B cell (primary cell): ENCODE measurements at regions of chr1 and their contacts with region 1.

Region 1: DNA sequence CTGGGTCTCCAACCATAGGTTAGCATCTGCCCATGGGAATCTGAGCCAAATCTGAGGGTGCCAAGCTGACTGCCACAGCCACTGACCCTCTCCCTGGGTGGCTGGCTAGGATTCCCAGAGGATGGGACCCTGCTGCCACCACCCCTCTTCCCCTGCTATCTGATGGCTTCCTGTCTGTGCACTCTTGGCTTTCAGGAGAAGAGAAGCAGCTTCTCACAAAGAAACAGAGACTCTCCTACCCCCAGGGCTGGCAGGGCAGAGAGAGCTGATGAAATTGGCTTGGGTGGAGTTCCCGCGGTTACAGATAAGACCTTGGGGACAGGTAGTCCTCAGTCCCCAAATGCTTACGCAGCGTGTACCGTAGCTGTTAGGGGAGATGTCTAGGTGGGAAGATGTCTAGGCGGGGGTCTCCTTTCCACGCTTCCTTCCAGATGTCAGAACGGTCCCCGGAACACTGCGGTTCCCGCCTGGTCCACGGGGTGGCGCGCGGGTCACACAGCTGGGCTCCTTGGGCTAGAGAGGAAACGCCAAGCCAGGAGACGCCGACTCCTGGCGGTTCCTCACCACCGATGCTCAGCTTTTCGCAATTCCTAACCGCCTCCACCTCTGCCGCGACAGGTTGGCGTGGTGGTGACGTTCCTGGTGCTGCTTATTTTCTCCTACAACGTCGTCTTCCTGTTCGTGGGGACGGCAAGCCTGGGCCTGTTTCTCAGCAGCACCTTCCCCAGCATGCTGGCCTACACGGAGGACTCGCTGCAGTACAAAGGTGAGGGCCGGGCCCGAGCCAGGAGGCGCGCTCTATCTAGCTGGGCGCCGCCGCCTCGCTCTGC is 40.1 kb downstream of the ELK4 start:
- DNase-seq: peak; percentile 90
- ATAC-seq: peak; percentile 89
- H3K4me3 ChIP-seq: peak overlapping the region in 4 of 5 experiments; percentile 51 to 69 (median 60)
- H3K4me3 Mint-ChIP-seq: peak overlapping the region; percentile 87
- H3K27ac ChIP-seq: peak overlapping the region; percentile 59 to 72
- H3K27ac Mint-ChIP-seq: peak overlapping the region; percentile 85
- H3K4me1 ChIP-seq: peaks cover 46 to 54% of the 10 kb centered on the region in 2 donors
- H3K4me1 Mint-ChIP-seq: peaks cover 48% of the 10 kb centered on the region
- H3K27me3 ChIP-seq: no peaks in the 10 kb centered on the region
- H3K27me3 Mint-ChIP-seq: no peaks in the 10 kb centered on the region
- CTCF ChIP-seq: peak; percentile 98

Region 2: GRCh38 chr1:205528887-205529825 is 62.6 kb before region 1 on chr1:
- CTCF ChIA-PET with region 1: interaction called, 49 read pairs
- POLR2A ChIA-PET with region 1: no interaction called
- intact Hi-C with region 1: loop called (anchors 2 kb)
- DNase-seq: peak; percentile 86
- ATAC-seq: peak; percentile 85
- H3K4me3 ChIP-seq: peak overlapping the region in 4 of 5 experiments; percentile 25 to 60 (median 38)
- H3K4me3 Mint-ChIP-seq: peak overlapping the region; percentile 79
- H3K27ac ChIP-seq: no peak overlapping the region
- H3K27ac Mint-ChIP-seq: peak overlapping the region; percentile 26
- H3K4me1 ChIP-seq: peaks cover 4 to 10% of the 10 kb centered on the region in 2 donors
- H3K4me1 Mint-ChIP-seq: peaks cover 7% of the 10 kb centered on the region
- H3K27me3 ChIP-seq: peaks cover 0 to 2% (median 0%) of the 10 kb centered on the region in 4 experiments
- H3K27me3 Mint-ChIP-seq: peaks cover 4% of the 10 kb centered on the region
- CTCF ChIP-seq: peak; percentile 97

Region 3: GRCh38 chr1:205610036-205610435 is 18.3 kb after region 1 on chr1:
- CTCF ChIA-PET with region 1: interaction called, 11 read pairs
- POLR2A ChIA-PET with region 1: no interaction called
- intact Hi-C with region 1: loop called (anchors 2 kb)
- DNase-seq: no peak
- ATAC-seq: no peak
- H3K4me3 ChIP-seq: no peak overlapping the region
- H3K4me3 Mint-ChIP-seq: no peak overlapping the region
- H3K27ac ChIP-seq: no peak overlapping the region
- H3K27ac Mint-ChIP-seq: no peak overlapping the region
- H3K4me1 ChIP-seq: peaks cover 4 to 9% of the 10 kb centered on the region in 2 donors
- H3K4me1 Mint-ChIP-seq: peaks cover 29% of the 10 kb centered on the region
- H3K27me3 ChIP-seq: no peaks in the 10 kb centered on the region
- H3K27me3 Mint-ChIP-seq: no peaks in the 10 kb centered on the region
- CTCF ChIP-seq: no peak

Region 4: GRCh38 chr1:205626216-205626615 is 34.5 kb after region 1 on chr1:
- CTCF ChIA-PET with region 1: interaction called, 287 read pairs
- POLR2A ChIA-PET with region 1: interaction called, 65 read pairs
- intact Hi-C with region 1: no loop called
- DNase-seq: peak; percentile 67
- ATAC-seq: no peak
- H3K4me3 ChIP-seq: peak overlapping the region in 2 of 5 experiments; percentile 4 to 15
- H3K4me3 Mint-ChIP-seq: peak overlapping the region; percentile 54
- H3K27ac ChIP-seq: peak overlapping the region; percentile 70 to 83
- H3K27ac Mint-ChIP-seq: peak overlapping the region; percentile 70
- H3K4me1 ChIP-seq: peaks cover 48 to 49% of the 10 kb centered on the region in 2 donors
- H3K4me1 Mint-ChIP-seq: peaks cover 76% of the 10 kb centered on the region
- H3K27me3 ChIP-seq: no peaks in the 10 kb centered on the region
- H3K27me3 Mint-ChIP-seq: no peaks in the 10 kb centered on the region
- CTCF ChIP-seq: no peak